ENCODE measurements at regions of chr19 and their contacts with region 1.

Region 1: DNA sequence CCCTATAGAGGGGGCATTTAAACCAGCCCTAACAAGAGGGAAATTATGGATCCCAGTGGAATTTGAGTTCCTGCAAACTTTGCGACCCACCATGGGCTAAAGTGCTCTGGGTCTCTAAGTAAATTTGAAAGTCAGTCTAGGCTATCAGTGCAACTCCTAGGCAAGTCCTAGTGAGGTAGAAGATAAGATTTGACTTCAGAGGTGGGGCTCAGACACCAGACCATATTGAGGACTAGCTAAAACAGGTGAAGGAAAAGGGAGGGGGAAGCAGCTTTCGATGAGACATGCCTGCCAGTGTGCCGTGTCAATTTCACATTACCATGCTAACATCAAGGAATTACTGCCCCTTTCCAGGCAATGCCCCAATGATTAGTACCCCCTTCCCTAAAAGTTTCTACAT is 38.4 kb downstream of the CD320 start:
- DNase-seq: no peak
- ATAC-seq: no peak
- H3K4me3 Mint-ChIP-seq: peak overlapping the region; percentile 77
- H3K27ac Mint-ChIP-seq: peak overlapping the region; percentile 97
- H3K4me1 Mint-ChIP-seq: peaks cover 18% of the 10 kb centered on the region
- H3K27me3 Mint-ChIP-seq: no peaks in the 10 kb centered on the region

Region 2: DNA sequence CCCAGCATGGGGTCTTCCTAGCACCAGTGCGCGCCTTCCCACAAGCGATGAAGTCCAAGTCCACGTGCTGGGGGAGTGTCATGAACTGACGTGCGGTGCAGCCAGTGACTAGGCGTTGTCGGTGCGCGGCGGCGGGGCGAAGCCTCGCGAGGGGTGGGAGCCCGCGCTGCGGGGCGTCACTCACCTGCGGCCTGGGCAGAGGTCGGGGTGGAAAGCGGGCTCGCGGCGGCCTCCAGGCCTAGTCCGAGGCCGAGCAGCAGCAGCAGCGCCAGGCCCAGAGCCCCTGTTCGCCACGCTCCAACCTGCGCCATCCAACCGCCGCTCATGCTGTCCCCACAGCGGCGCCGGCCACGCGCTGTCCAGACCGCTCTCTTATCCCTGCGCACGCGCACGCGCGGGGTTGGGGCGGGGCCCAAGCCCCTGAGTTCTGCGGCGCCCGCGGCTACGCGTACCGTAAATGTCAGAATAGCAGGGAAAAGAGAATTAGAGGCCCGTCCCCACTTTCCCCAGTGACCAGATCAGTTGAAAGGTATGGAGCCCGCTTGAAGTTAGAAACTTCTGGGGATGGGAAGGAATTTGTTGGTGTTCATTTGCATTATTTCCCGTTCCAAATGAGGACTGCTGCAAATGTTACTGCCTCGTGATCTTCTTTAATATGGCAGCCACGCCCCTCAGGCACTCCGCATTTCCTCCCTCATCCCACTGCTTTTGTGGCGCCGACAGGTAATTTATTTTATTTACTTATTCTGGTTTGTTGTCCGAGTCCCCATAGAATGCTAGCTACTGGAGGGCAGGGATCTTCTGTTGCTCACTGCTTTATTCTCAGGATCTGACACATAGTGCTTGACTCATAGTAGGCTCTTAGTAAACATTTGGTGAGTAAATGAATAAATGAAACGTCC is 38.5 kb after region 1 on chr19 and contains the start of gene CD320:
- CTCF ChIA-PET with region 1: interaction called, 3 read pairs
- POLR2A ChIA-PET with region 1: no interaction called
- intact Hi-C with region 1: loop called in 1 of 2 experiments (anchors 5 kb)
- DNase-seq: peak; percentile 90
- ATAC-seq: peak; percentile 91
- H3K4me3 Mint-ChIP-seq: peak within 1 kb of the TSS; percentile 90
- H3K27ac Mint-ChIP-seq: peak within 1 kb of the TSS; percentile 79
- H3K4me1 Mint-ChIP-seq: peaks cover 34% of the 10 kb centered on the region
- H3K27me3 Mint-ChIP-seq: no peaks in the 10 kb centered on the region
- total RNA-seq, gene CD320: 39.9 to 41.4 TPM

Region 3: GRCh38 chr19:8396563-8397203 is 127.0 kb after region 1 on chr19:
- CTCF ChIA-PET with region 1: no interaction called
- POLR2A ChIA-PET with region 1: no interaction called
- intact Hi-C with region 1: loop called (anchors 2 to 5 kb)
- DNase-seq: peak; percentile 91
- ATAC-seq: peak; percentile 96
- H3K4me3 Mint-ChIP-seq: no peak overlapping the region
- H3K27ac Mint-ChIP-seq: peak overlapping the region; percentile 76
- H3K4me1 Mint-ChIP-seq: peaks cover 30% of the 10 kb centered on the region
- H3K27me3 Mint-ChIP-seq: no peaks in the 10 kb centered on the region